Tibial artery (tissue), 4 donors: ENCODE measurements at regions of chr4 and their contacts with region 1.

Region 1: GRCh38 chr4:99563310-99564186 is at the start of gene TRMT10A:
- DNase-seq: peak; percentile 97 to 98
- H3K4me3 ChIP-seq: peak within 1 kb of the TSS; percentile 54 to 61
- H3K27ac ChIP-seq: peak within 1 kb of the TSS; percentile 86 to 89
- H3K4me1 ChIP-seq: peaks cover 0 to 31% (median 13%) of the 10 kb centered on the region in 4 donors
- H3K27me3 ChIP-seq: no peaks in the 10 kb centered on the region
- CTCF ChIP-seq: peak in 1 of 2 experiments; percentile 13

Region 2: GRCh38 chr4:99536271-99536670 is 27.3 kb before region 1 on chr4:
- intact Hi-C with region 1: no loop called
- DNase-seq: no peak
- H3K4me3 ChIP-seq: no peak overlapping the region
- H3K27ac ChIP-seq: no peak overlapping the region
- H3K4me1 ChIP-seq: no peaks in the 10 kb centered on the region
- H3K27me3 ChIP-seq: no peaks in the 10 kb centered on the region
- CTCF ChIP-seq: no peak

Region 3: GRCh38 chr4:99655308-99656081 is 91.9 kb after region 1 on chr4:
- intact Hi-C with region 1: loop called (anchors 10 kb)
- DNase-seq: peak; percentile 65 to 87
- H3K4me3 ChIP-seq: no peak overlapping the region
- H3K27ac ChIP-seq: peak overlapping the region; percentile 30 to 60
- H3K4me1 ChIP-seq: peaks cover 0 to 24% (median 21%) of the 10 kb centered on the region in 4 donors
- H3K27me3 ChIP-seq: no peaks in the 10 kb centered on the region
- CTCF ChIP-seq: no peak

Region 4: GRCh38 chr4:99808260-99808857 is 244.8 kb after region 1 on chr4:
- intact Hi-C with region 1: loop called (anchors 5 kb)
- DNase-seq: peak in 1 of 2 donors; percentile 38
- H3K4me3 ChIP-seq: no peak overlapping the region
- H3K27ac ChIP-seq: no peak overlapping the region
- H3K4me1 ChIP-seq: peaks cover 0 to 5% (median 0%) of the 10 kb centered on the region in 4 donors
- H3K27me3 ChIP-seq: no peaks in the 10 kb centered on the region
- CTCF ChIP-seq: peak; percentile 53 to 67

Region 5: DNA sequence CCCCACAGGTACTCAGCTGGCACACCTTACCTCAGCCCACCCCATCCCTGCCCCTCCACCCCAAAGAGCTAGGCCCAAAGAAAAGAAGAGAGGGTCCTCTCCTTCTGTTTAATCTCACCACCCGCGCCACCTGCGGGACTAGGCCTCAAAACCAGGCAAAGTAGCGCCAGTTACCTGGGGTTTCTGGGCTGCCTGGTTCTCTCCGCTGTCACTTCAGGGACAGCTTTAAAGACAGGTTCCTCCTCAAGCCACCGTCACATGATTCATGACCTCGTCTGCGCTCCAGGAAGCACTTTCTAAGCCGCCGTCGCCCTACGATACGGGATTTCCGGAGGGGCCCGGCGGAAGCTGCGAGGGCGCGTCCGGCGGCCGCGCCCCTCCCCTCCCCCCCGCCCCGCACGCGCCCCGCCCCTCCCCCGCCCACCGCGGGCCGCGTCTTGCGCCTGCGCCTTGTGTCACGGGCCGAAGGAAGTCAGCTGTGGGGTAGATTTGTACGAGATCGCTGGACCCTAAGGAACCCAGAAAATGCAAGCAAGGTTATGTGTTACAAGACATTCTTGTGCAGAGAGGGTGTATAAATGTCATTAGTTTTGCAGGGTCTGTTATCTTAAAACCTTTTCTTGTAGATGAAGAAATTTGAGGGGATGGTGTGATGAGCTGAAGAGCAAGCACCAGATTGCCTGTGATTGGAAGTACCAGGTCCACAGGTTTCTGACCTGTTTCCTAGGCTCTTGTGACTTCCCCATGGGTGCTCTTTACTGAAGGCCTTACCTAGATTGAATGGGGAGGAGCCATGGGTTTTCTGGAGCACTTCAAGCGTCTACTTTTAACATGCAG is 330.8 kb after region 1 on chr4 and contains the start of gene LAMTOR3:
- intact Hi-C with region 1: loop called (anchors 5 kb)
- DNase-seq: peak; percentile 92 to 95
- H3K4me3 ChIP-seq: peak within 1 kb of the TSS; percentile 69 to 82
- H3K27ac ChIP-seq: peak within 1 kb of the TSS; percentile 87 to 88
- H3K4me1 ChIP-seq: peaks cover 0 to 39% (median 17%) of the 10 kb centered on the region in 4 donors
- H3K27me3 ChIP-seq: no peaks in the 10 kb centered on the region
- CTCF ChIP-seq: no peak

Region 6: DNA sequence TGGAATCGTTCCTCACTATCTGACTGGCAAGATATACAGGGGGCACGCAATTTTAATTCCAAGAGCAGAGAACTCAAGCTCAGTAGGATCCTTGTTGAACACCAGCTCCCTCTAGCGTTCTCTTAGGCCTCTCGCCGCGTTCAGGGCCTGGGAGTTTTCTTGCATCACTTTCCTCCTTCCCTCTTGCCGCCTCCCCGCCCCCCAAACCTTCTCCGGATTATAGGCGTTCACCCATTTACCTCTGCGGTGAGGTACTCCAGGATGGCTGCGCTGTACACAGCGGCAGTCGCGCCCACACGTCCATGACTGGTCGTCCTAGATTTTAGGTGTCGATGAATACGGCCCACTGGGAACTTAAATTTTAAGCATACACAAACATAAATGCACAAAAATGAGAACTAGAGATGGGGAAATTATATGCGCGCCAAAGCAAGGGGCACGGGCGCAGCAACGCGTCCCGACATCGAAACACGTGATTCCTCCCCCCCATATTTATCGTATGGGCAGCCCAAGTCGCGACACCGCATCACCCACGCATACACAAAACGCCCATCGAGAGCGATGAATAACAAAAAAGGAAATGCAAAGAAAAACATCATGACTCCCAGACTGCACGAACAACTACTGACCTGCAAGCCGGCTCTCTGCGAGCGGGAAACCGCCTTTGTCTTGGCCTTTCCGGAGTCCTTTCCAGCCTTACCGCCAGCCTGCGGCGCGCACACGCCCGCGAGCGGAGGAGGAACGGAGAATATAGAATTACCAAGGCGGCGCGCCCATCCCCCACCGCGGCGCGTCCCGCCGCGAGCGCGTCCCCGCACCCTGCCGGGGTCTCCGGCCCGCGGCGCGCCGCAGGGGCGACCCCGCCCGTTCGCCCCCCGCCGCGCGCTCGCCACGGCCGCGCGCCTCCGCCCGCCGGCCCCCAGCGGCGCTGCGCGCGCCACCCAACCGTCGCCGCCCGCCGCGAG is 385.8 kb after region 1 on chr4:
- intact Hi-C with region 1: loop called (anchors 5 kb)
- DNase-seq: peak; percentile 92 to 95
- H3K4me3 ChIP-seq: peak overlapping the region; percentile 74 to 90
- H3K27ac ChIP-seq: peak overlapping the region; percentile 96 to 97
- H3K4me1 ChIP-seq: peaks cover 0 to 45% (median 19%) of the 10 kb centered on the region in 4 donors
- H3K27me3 ChIP-seq: no peaks in the 10 kb centered on the region
- CTCF ChIP-seq: peak; percentile 75 to 78